ENCODE measurements at regions of chr1 and their contacts with region 1.

Region 1: GRCh38 chr1:45929257-45929687 is 125.9 kb downstream of the MAST2 start:
- DNase-seq: peak; percentile 21 to 84
- H3K4me3 ChIP-seq: no peak overlapping the region
- H3K27ac ChIP-seq: peak overlapping the region; percentile 28
- H3K4me1 ChIP-seq: peaks cover 23% of the 10 kb centered on the region
- H3K27me3 ChIP-seq: no peaks in the 10 kb centered on the region
- CTCF ChIP-seq: no peak

Region 2: DNA sequence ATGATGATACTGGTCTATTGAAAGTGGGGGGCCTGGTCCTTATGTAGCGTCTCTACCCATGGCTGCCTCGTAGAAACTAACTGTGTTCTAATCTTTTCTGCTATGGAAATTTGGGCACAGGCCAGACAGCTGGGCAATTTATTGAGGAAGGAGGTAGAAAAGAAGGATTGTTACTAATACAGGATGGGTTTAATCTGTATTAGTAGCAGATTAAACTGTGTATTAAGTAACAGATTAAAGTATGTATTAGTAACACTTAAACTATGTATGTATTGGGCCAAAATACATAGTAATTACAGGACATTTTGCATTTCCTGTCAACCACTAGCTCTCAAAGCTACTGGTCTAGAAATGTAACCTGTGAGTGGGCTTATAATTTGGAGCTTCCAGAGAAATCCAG is 16.2 kb after region 1 on chr1:
- CTCF ChIA-PET with region 1: no interaction called
- POLR2A ChIA-PET with region 1: interaction called, 33 read pairs
- intact Hi-C with region 1: no loop called
- DNase-seq: no peak
- H3K4me3 ChIP-seq: no peak overlapping the region
- H3K27ac ChIP-seq: no peak overlapping the region
- H3K4me1 ChIP-seq: no peaks in the 10 kb centered on the region
- H3K27me3 ChIP-seq: no peaks in the 10 kb centered on the region
- CTCF ChIP-seq: no peak